Psoas muscle (tissue), 8 donors: ENCODE measurements at regions of chr22 and their contacts with region 1.

Region 1: DNA sequence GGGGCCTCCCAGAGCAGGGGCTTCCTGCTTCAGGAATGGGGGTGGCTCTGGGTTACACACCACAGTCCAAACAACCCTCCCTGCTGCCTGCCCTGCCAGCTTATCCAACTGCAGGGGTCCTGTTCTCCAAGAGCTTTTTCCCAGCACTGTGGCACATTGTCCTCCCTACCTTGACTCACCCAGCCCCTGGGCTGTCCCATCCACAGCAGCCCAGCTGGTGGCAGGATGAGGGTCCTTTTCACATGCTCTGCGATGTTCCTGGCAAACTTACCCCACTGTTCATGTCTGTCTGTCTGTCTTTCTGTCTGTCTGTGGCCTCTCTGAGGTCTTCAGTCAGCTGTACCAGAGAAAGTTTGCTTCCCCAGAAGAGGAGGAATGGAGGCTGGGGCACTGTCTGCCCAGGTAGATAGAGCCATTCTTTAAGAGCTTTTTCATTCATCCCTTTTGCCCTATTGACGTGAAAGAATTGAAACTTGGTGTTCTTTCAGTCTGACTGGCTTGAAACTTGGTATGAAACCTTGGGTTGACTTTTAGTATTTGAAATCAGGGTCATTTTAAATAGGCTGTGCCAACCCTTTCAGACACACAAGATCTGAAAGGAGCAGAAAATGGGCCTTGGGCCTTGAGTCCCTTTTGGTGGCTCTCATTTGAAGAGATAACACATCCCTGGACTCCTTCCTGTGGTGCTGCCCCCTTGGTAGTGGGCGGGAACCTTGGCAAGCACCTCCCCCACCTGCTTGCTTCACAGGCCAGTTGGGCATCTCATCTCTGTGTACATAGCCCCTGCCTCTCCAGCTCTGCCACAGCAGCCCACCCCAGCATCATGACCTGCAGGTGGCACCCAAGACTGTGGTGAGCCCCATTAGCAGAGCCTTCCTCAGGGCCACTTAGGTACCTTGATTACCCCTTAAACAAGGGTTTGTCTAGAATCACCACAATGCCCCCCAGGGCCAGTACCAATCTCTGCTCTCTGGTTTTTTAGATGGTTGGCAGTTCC is 74.6 kb upstream of the SUSD2 start:
- DNase-seq: no peak
- ATAC-seq: peak in 3 of 4 donors; percentile 44 to 60 (median 59)
- H3K4me3 ChIP-seq: no peak overlapping the region
- H3K27ac ChIP-seq: peak overlapping the region; percentile 9
- H3K4me1 ChIP-seq: no peaks in the 10 kb centered on the region
- H3K27me3 ChIP-seq: no peaks in the 10 kb centered on the region
- CTCF ChIP-seq: peak; percentile 26

Region 2: DNA sequence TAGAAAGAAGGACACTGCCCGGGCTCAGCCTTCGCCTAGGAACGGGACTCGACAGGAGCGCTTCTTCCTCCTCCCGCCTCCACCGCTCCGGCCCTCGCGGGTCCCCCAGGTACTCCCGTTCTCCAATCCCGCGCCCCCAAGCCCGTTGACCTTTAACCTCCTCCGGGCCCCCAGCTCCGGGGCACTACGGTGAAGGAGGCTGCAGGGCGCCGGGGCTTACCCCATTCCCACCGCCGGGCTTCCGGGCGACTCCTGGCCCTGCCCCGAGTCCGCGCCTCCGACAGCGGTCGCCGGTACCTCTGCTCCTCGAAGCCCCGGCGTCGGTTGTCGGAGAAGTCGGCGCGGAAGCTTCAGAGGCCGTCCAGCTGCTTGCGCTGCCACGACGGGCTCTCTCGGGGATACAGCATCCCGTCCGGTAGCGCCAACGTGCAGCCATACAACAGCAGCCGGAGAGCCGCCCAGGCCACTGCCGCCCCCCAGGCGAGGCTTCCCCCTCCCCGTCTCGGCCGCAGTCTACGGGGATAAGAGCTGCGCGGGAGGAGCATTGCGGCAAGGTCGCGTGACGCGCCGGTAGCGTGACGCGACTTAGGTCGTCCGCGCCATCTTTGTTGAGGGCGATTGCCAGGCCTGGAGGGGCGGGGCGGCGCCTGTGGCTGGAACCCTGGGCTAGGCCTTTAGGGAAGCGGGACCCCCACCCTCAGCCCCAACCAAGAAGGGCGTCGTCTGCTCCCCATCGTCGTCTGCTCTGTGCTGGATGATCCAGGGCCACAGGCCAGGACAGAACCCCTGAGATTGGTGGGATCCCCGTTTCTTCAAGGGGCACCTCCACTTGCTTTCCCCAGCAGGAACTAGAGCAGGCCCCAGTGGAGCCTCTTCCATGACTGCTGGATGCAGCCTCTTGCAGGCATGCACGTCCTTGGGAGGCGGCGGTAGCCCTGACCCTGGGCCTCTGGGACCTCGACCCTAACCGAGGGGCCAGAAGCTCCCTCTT is 389.6 kb before region 1 on chr22:
- intact Hi-C with region 1: no loop called
- DNase-seq: peak; percentile 87 to 90
- ATAC-seq: peak; percentile 92 to 97 (median 94)
- H3K4me3 ChIP-seq: peak overlapping the region; percentile 98
- H3K27ac ChIP-seq: peak overlapping the region; percentile 85
- H3K4me1 ChIP-seq: peaks cover 3% of the 10 kb centered on the region
- H3K27me3 ChIP-seq: no peaks in the 10 kb centered on the region
- CTCF ChIP-seq: no peak

Region 3: GRCh38 chr22:24156913-24157821 is 50.5 kb after region 1 on chr22:
- intact Hi-C with region 1: loop called in 1 of 2 experiments (anchors 5 kb)
- DNase-seq: peak; percentile 83 to 88
- ATAC-seq: peak; percentile 74 to 86 (median 80)
- H3K4me3 ChIP-seq: peak overlapping the region; percentile 84
- H3K27ac ChIP-seq: peak overlapping the region; percentile 71
- H3K4me1 ChIP-seq: peaks cover 16% of the 10 kb centered on the region
- H3K27me3 ChIP-seq: no peaks in the 10 kb centered on the region
- CTCF ChIP-seq: peak; percentile 67

Region 4: DNA sequence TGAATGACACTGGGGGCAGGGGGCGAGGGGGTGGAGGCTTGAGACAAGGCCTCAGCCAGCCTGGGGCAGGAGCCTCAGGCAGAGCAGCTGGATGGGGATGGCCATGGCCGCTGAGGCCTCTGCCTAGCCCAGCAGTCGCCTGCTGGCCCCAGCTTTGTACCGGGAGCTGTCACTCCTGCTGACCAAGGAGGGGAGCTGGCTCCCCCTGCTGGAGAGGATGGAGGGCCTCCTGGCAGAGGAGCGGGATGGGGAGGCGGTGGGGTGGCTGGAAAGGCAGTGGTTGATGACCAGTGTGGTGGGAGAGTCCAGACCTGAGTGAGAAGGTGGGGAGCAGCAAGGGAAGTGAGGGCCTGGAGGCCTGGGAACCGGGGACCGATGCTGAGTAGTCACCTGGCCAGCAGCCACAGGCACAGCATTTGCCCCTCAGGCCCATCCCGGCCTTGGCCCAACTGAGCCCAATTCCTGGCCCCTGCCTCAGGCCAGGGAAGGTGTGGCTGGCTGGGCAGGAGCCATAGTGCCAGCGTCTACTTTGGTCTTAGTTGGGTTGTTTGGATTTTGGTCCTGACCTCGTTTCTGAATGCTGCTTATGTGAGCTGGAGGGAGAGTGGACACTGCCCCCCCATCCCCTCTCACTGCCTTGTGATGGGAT is 68.6 kb after region 1 on chr22:
- intact Hi-C with region 1: loop called in 1 of 2 experiments (anchors 2 kb)
- DNase-seq: peak; percentile 85 to 90
- ATAC-seq: peak; percentile 84 to 91 (median 86)
- H3K4me3 ChIP-seq: no peak overlapping the region
- H3K27ac ChIP-seq: peak overlapping the region; percentile 30
- H3K4me1 ChIP-seq: no peaks in the 10 kb centered on the region
- H3K27me3 ChIP-seq: no peaks in the 10 kb centered on the region
- CTCF ChIP-seq: peak; percentile 76

Region 5: DNA sequence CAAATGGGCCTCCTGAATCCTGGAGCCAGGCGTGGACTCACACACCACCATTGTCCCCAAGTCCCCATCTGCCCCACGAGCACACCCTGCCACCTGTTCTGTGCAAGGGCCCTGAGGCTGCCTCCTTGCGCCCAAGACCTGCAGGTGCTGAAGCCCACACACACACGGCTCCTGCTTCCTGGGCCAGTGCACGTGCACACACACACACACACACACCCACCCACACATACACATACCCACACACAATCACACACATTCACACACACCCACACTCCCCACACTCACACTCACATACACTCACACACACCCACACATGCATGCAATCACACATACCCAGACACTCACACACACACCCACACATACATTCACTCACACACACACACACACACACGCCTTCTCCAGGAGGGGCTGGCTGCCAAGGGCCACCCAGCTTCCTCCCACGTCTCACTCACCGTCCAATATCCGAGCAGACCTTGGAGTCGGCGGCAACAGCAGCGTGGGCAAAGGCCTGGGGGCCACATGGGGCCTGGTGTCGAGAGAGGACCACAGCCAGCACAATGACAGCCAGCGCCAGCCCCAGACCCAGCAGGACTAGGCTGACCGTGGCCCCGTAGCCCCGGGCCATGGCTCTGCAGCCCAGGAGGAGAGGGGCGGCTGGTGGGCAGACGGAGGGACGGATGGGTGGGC is 137.6 kb after region 1 on chr22:
- intact Hi-C with region 1: loop called in 1 of 2 experiments (anchors 10 kb)
- DNase-seq: peak; percentile 32 to 61
- ATAC-seq: no peak
- H3K4me3 ChIP-seq: peak overlapping the region; percentile 44
- H3K27ac ChIP-seq: peak overlapping the region; percentile 30
- H3K4me1 ChIP-seq: peaks cover 4% of the 10 kb centered on the region
- H3K27me3 ChIP-seq: no peaks in the 10 kb centered on the region
- CTCF ChIP-seq: no peak